ENCODE measurements at regions of chr7 and their contacts with region 1.

Region 1: GRCh38 chr7:84675633-84676034 is 481.0 kb upstream of the SEMA3A start:
- DNase-seq: no peak
- H3K4me3 ChIP-seq: no peak overlapping the region
- H3K27me3 ChIP-seq: no peaks in the 10 kb centered on the region
- CTCF ChIP-seq: no peak

Region 2: GRCh38 chr7:84248267-84248666 is 427.4 kb before region 1 on chr7:
- CTCF ChIA-PET with region 1: no interaction called
- POLR2A ChIA-PET with region 1: interaction called, 17 read pairs
- DNase-seq: no peak
- H3K4me3 ChIP-seq: no peak overlapping the region
- H3K27me3 ChIP-seq: no peaks in the 10 kb centered on the region
- CTCF ChIP-seq: no peak